Ovary (tissue), 10 donors: ENCODE measurements at regions of chr13 and their contacts with region 1.

Region 1: DNA sequence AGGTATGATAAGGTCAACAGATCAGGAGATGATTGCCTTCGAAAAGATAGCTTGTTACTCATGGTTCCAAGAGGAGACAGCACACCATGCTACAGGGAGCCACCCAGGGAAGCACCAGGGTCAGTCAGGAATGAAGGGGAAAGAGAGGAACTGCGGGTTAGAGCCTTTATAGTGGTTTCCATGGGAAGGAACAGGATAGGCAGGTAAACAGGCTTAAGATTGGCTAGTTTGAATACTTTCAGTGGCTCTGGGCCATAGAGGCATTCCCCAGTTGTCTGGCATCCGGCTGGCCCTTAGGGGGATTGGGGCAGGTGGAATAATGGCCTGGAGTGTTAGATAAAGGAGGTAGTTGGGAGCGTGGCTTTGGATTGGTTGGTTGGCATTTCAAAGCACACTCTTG is 74.1 kb upstream of the SERTM1 start:
- DNase-seq: no peak
- H3K4me3 ChIP-seq: no peak overlapping the region
- H3K27ac ChIP-seq: no peak overlapping the region
- H3K4me1 ChIP-seq: no peaks in the 10 kb centered on the region
- H3K27me3 ChIP-seq: no peaks in the 10 kb centered on the region
- CTCF ChIP-seq: no peak
- EP300 ChIP-seq: no peak
- POLR2A ChIP-seq: no peak

Region 2: GRCh38 chr13:36493046-36493445 is 106.7 kb before region 1 on chr13:
- intact Hi-C with region 1: loop called in 1 of 4 experiments (anchors 10 kb)
- DNase-seq: no peak
- H3K4me3 ChIP-seq: no peak overlapping the region
- H3K27ac ChIP-seq: no peak overlapping the region
- H3K4me1 ChIP-seq: no peaks in the 10 kb centered on the region
- H3K27me3 ChIP-seq: no peaks in the 10 kb centered on the region
- CTCF ChIP-seq: no peak
- EP300 ChIP-seq: no peak
- POLR2A ChIP-seq: no peak